ENCODE measurements at regions of chr16 and their contacts with region 1.

Region 1: GRCh38 chr16:82639666-82640336 is 13.0 kb downstream of the CDH13 start:
- DNase-seq: peak; percentile 16 to 50
- ATAC-seq: peak; percentile 31 to 61
- H3K4me3 ChIP-seq: no peak overlapping the region
- H3K27ac ChIP-seq: peak overlapping the region; percentile 10 to 63 (median 42)
- H3K4me1 ChIP-seq: peaks cover 42 to 45% of the 10 kb centered on the region in 2 donors
- H3K27me3 ChIP-seq: no peaks in the 10 kb centered on the region
- CTCF ChIP-seq: peak; percentile 47 to 75 (median 66)
- POLR2A ChIP-seq: no peak

Region 2: DNA sequence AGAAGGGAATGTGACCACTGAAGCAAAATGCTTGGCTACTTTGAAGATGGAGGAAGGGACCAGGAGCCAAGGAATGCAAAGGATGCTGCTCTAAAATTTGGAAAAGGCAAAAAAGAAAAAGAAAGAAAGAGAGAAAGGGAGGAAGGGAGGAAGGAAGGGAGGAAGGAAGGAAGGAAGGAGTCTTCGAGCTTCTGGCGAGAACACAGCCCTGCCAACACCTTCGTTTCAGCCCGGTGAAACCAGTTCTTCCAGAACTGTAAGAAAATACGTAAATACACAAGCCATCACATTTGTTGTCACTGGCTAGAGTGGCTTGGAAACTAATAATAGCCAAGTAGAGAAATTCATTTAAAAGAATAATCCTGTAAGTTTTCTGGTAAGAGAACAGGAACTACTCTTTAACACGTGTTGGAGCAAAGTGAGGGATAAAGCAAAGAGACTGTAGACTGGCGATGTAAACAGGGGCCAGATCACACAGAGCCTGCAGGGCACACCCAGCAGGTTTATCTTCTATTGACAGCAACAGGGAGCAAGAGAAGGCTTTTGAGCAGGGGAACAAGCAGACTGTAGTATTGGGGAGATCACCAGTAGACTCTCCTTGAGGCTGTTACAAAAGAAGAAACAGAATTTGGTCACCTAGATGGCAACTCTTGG is 281.1 kb before region 1 on chr16:
- in situ Hi-C with region 1: no loop called
- intact Hi-C with region 1: no loop called
- DNase-seq: no peak
- ATAC-seq: no peak
- H3K4me3 ChIP-seq: no peak overlapping the region
- H3K27ac ChIP-seq: no peak overlapping the region
- H3K4me1 ChIP-seq: no peaks in the 10 kb centered on the region
- H3K27me3 ChIP-seq: no peaks in the 10 kb centered on the region
- CTCF ChIP-seq: no peak
- POLR2A ChIP-seq: no peak

Region 3: GRCh38 chr16:82693751-82694150 is 54.0 kb after region 1 on chr16:
- in situ Hi-C with region 1: no loop called
- intact Hi-C with region 1: loop called (anchors 2 kb)
- DNase-seq: no peak
- ATAC-seq: no peak
- H3K4me3 ChIP-seq: no peak overlapping the region
- H3K27ac ChIP-seq: no peak overlapping the region
- H3K4me1 ChIP-seq: peaks cover 8 to 11% of the 10 kb centered on the region in 2 donors
- H3K27me3 ChIP-seq: no peaks in the 10 kb centered on the region
- CTCF ChIP-seq: no peak
- POLR2A ChIP-seq: no peak